Mammary epithelial cell (primary cell): ENCODE measurements at regions of chr22 and their contacts with region 1.

Region 1: GRCh38 chr22:44608597-44609399 is 93.2 kb upstream of the PRR5 start:
- DNase-seq: no peak
- H3K4me3 ChIP-seq: no peak overlapping the region
- H3K27ac ChIP-seq: no peak overlapping the region
- H3K4me1 ChIP-seq: no peaks in the 10 kb centered on the region
- H3K27me3 ChIP-seq: no peaks in the 10 kb centered on the region
- CTCF ChIP-seq: no peak

Region 2: DNA sequence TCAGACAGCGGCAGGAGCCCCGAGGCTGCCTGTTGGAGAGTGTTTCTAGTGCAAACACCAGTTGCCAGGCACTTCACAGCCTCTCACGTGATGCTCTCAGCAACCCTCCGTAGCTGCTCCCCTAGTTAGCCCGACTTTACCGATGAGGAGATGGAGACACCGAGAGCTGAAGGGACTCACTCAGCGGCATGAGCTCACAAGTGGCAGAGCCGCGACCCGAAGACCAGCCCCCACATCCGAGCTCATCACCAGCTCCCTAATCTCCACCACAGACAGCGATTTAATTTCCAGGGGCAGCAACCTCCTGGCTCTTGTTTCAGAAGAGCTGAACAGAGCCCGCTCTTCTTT is 82.0 kb before region 1 on chr22:
- CTCF ChIA-PET with region 1: no interaction called
- dilution Hi-C with region 1: loop called (anchors 5 kb)
- in situ Hi-C with region 1: no loop called
- intact Hi-C with region 1: no loop called
- DNase-seq: no peak
- H3K4me3 ChIP-seq: no peak overlapping the region
- H3K27ac ChIP-seq: no peak overlapping the region
- H3K4me1 ChIP-seq: no peaks in the 10 kb centered on the region
- H3K27me3 ChIP-seq: peaks cover 1% of the 10 kb centered on the region
- CTCF ChIP-seq: no peak

Region 3: DNA sequence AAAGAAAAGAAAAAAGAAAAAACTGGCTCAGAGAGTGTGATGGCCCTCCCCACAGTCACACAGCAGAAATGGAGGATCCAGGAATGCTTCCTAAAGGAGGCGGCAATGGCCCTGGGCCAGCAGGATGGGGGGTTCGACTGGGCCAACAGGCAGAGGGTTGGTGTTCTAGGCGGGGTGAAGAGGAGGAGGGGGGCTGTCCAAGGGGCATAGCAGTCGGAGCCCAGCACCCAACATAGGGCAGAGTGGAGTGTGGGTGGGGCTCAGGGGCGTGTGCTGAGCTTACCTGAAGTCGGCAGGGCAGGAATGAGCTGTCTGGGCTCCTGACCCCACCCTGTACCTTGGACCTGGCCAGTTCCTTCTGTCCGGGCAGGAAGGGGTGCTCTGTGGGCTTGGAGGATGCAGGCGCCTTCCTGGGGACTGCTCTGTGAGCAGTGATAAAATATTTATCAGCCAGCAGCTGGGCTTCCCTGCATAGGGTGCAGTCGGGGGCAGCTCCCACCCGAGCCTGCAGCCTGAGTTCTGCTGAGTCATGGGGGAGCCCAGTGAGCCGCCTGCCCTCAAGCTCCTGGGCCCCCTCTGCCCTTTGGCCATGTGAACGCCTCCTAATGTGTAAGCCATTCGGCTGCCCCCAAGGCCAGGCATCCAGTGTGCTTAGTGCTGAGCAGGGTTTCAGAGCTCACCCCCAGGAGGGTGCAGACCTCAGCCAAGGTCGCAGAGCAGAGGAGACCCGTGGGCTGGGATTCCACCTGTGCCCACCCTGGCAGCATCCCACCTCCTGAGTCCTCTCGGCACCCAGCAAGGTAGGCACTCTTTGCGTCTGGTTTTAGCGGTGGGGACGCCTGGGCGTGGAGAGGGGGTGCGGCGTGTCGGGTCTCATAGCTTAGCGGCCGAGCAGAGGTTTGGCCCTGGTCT is 67.9 kb after region 1 on chr22:
- CTCF ChIA-PET with region 1: no interaction called
- dilution Hi-C with region 1: loop called (anchors 5 kb)
- in situ Hi-C with region 1: no loop called
- intact Hi-C with region 1: no loop called
- DNase-seq: no peak
- H3K4me3 ChIP-seq: no peak overlapping the region
- H3K27ac ChIP-seq: no peak overlapping the region
- H3K4me1 ChIP-seq: peaks cover 17% of the 10 kb centered on the region
- H3K27me3 ChIP-seq: no peaks in the 10 kb centered on the region
- CTCF ChIP-seq: no peak